ENCODE measurements at regions of chr3 and their contacts with region 1.

Region 1: GRCh38 chr3:172201136-172201869 is 161.9 kb downstream of the FNDC3B start:
- DNase-seq: peak; percentile 70
- H3K4me3 Mint-ChIP-seq: peak overlapping the region; percentile 50
- H3K27ac Mint-ChIP-seq: peak overlapping the region; percentile 89
- H3K4me1 Mint-ChIP-seq: peaks cover 39% of the 10 kb centered on the region
- H3K27me3 Mint-ChIP-seq: no peaks in the 10 kb centered on the region
- CTCF ChIP-seq: no peak

Region 2: DNA sequence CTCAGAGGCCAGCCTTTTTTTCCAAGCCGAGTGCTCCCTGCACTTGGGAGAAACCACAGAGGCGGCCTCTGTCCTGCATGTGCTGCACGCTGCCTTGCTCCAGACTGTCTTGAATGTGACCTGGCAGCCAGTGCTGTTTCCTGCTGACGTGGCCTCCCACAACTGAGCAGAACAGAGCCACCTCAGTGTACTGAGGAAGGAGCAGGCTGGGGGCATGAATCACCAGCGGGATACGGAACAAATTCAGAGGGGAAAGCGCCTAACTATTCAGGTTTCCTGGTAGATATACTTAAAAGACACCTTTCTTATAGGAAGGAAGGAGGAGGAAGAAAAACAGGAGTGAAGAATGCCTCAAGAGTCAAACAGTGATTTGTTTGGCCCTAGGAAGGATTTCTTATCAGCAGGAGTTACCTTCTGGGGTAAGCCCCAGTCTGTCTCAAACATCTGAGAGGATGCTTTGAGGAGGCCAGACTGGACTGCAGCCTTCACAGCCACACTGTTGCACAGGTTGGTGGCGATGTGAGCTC is 47.9 kb before region 1 on chr3:
- CTCF ChIA-PET with region 1: interaction called, 3 read pairs
- POLR2A ChIA-PET with region 1: interaction called, 10 read pairs
- intact Hi-C with region 1: no loop called
- DNase-seq: peak; percentile 94
- H3K4me3 Mint-ChIP-seq: peak overlapping the region; percentile 53
- H3K27ac Mint-ChIP-seq: peak overlapping the region; percentile 88
- H3K4me1 Mint-ChIP-seq: peaks cover 53% of the 10 kb centered on the region
- H3K27me3 Mint-ChIP-seq: no peaks in the 10 kb centered on the region
- CTCF ChIP-seq: no peak

Region 3: GRCh38 chr3:172877011-172877410 is 675.7 kb after region 1 on chr3:
- CTCF ChIA-PET with region 1: no interaction called
- POLR2A ChIA-PET with region 1: no interaction called
- intact Hi-C with region 1: no loop called
- DNase-seq: no peak
- H3K4me3 Mint-ChIP-seq: no peak overlapping the region
- H3K27ac Mint-ChIP-seq: no peak overlapping the region
- H3K4me1 Mint-ChIP-seq: no peaks in the 10 kb centered on the region
- H3K27me3 Mint-ChIP-seq: peaks cover 12% of the 10 kb centered on the region
- CTCF ChIP-seq: no peak

Measured in MCF 10A (cell line).